CD4-positive, alpha-beta memory T cell (primary cell): ENCODE measurements at regions of chrX and their contacts with region 1.

Region 1: GRCh38 chrX:7925867-7926472 is 1.2 kb downstream of the PNPLA4 start:
- DNase-seq: peak; percentile 60 to 74 (median 68)
- H3K4me3 ChIP-seq: no peak overlapping the region
- H3K4me3 Mint-ChIP-seq: peak overlapping the region; percentile 57 to 98 (median 69)
- H3K27ac ChIP-seq: no peak overlapping the region
- H3K27ac Mint-ChIP-seq: peak overlapping the region; percentile 18 to 98 (median 86)
- H3K4me1 ChIP-seq: peaks cover 18% of the 10 kb centered on the region
- H3K4me1 Mint-ChIP-seq: peaks cover 11 to 30% (median 14%) of the 10 kb centered on the region in 4 donors
- H3K27me3 ChIP-seq: no peaks in the 10 kb centered on the region
- H3K27me3 Mint-ChIP-seq: peaks cover 2 to 4% of the 10 kb centered on the region in 2 donors

Region 2: GRCh38 chrX:7068939-7069371 is 857.0 kb before region 1 on chrX:
- CTCF ChIA-PET with region 1: no interaction called
- POLR2A ChIA-PET with region 1: no interaction called
- intact Hi-C with region 1: loop called (anchors 10 kb)
- DNase-seq: peak in 2 of 5 donors; percentile 15 to 22
- H3K4me3 ChIP-seq: no peak overlapping the region
- H3K4me3 Mint-ChIP-seq: peak overlapping the region; percentile 18 to 70 (median 47)
- H3K27ac ChIP-seq: no peak overlapping the region
- H3K27ac Mint-ChIP-seq: peak overlapping the region in 5 of 7 donors; percentile 27 to 88 (median 78)
- H3K4me1 ChIP-seq: peaks cover 10% of the 10 kb centered on the region
- H3K4me1 Mint-ChIP-seq: peaks cover 21 to 40% (median 28%) of the 10 kb centered on the region in 4 donors
- H3K27me3 ChIP-seq: no peaks in the 10 kb centered on the region
- H3K27me3 Mint-ChIP-seq: no peaks in the 10 kb centered on the region

Region 3: GRCh38 chrX:7132335-7133049 is 793.5 kb before region 1 on chrX:
- CTCF ChIA-PET with region 1: no interaction called
- POLR2A ChIA-PET with region 1: no interaction called
- intact Hi-C with region 1: loop called (anchors 5 kb)
- DNase-seq: peak in 3 of 5 donors; percentile 20 to 30 (median 28)
- H3K4me3 ChIP-seq: no peak overlapping the region
- H3K4me3 Mint-ChIP-seq: peak overlapping the region in 1 of 8 donors; percentile 2
- H3K27ac ChIP-seq: no peak overlapping the region
- H3K27ac Mint-ChIP-seq: peak overlapping the region in 4 of 7 donors; percentile 11 to 91 (median 62)
- H3K4me1 ChIP-seq: peaks cover 12% of the 10 kb centered on the region
- H3K4me1 Mint-ChIP-seq: peaks cover 22 to 54% (median 26%) of the 10 kb centered on the region in 4 donors
- H3K27me3 ChIP-seq: no peaks in the 10 kb centered on the region
- H3K27me3 Mint-ChIP-seq: no peaks in the 10 kb centered on the region

Region 4: DNA sequence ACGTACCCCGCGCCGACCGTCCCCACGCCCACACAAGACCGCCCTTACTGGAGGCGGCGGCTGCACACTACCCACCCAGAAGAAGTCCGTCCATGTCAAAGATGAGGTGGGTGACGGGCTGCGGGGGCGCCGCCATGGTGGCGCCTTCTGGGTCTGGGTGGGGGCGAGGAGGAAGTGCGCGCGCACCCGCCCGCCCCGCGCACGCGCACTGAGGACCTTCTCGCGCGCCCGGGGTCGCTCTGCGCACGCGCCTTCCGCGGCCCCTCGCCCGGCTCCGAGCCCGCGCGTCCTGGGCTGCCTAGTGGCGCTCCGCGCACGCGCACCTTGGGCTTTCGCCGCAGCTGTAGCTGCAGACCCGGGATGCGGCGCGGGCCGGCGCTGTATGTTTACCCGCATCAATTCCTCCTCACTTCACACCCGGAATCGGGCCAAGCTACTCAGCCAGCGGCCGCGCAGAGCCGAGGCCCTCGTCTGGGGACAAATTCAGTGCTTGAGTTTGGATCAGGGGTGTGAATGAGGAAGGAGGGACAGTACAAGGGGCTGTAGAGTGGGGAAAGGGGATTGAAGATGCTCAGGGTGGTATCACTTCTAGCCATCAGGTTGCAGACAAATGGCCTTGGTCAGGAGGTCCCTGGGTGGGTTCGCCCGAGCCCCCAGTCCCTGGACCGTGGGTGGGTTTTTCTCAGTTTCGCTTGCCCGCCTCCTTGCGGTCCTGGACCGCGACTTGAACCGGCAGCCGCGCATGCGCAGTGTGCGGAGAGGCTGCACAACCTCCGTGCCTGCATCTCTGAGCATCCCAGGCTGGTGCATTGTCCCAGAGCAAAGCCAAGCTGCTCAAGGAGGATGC is 777.8 kb before region 1 on chrX and contains the start of gene PUDP:
- CTCF ChIA-PET with region 1: no interaction called
- POLR2A ChIA-PET with region 1: no interaction called
- intact Hi-C with region 1: loop called (anchors 5 kb)
- DNase-seq: peak; percentile 79 to 95 (median 94)
- H3K4me3 ChIP-seq: peak within 1 kb of the TSS; percentile 57 to 99
- H3K4me3 Mint-ChIP-seq: peak within 1 kb of the TSS; percentile 92 to 96 (median 94)
- H3K27ac ChIP-seq: peak within 1 kb of the TSS; percentile 65
- H3K27ac Mint-ChIP-seq: peak within 1 kb of the TSS; percentile 90 to 96 (median 94)
- H3K4me1 ChIP-seq: peaks cover 16% of the 10 kb centered on the region
- H3K4me1 Mint-ChIP-seq: peaks cover 13 to 43% (median 20%) of the 10 kb centered on the region in 4 donors
- H3K27me3 ChIP-seq: no peaks in the 10 kb centered on the region
- H3K27me3 Mint-ChIP-seq: no peaks in the 10 kb centered on the region
- total RNA-seq, gene PUDP: 10.7 to 11.9 TPM